GM12878 (cell line): ENCODE measurements at regions of chr10 and their contacts with region 1.

Region 1: DNA sequence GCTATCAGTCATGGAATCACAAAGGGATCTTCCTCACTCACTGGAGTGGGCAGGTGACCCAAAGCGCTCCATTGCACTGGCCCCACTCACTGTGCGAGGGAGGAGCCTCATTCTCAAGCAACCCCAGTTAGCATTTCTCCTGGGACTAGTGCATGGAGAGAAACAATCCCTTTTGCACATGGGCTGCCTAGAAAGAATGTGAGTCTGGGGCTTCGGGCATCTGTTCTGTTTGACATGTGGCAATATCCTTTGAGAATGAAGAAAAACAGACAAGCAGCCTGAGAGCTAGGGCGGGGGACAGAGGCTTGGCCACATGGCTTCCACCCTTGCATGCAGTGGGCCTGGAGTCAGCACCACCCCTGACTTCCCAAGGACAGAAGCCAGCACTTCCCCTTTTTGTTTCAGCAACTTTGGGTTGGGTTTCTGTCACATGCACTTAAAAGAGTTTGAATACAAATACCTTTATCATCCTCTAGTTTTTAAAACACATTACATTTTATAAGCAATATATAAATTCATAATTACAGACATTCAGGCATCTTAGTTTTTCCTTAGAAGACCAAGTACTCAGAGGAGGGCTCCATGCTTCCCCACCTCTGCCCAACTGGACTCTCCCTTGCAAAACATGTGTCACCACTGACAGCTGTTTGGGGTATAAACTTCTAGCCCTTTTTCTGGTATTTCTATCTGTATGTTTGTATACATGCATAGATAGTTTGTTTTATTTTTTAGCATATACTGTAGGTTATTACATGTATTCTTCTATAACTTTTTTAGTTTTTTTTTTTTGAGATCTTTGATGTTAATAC is 73.8 kb downstream of the RBM20 start:
- DNase-seq: no peak
- ATAC-seq: peak; percentile 74
- H3K4me3 ChIP-seq: no peak overlapping the region
- H3K27ac ChIP-seq: no peak overlapping the region
- H3K4me1 ChIP-seq: 0 out of 2 replicates have a peak, but pooled peaks cover 4% of the 10 kb centered on the region
- H3K27me3 ChIP-seq: no peaks in the 10 kb centered on the region
- CTCF ChIP-seq: no peak
- EP300 ChIP-seq: no peak
- POLR2A ChIP-seq: no peak
- RAD21 ChIP-seq: no peak

Region 2: GRCh38 chr10:110651044-110651958 is 66.7 kb before region 1 on chr10:
- CTCF ChIA-PET with region 1: no interaction called
- POLR2A ChIA-PET with region 1: no interaction called
- RAD21 ChIA-PET with region 1: no interaction called
- SMC1A ChIA-PET with region 1: no interaction called
- in situ Hi-C with region 1: no loop called
- intact Hi-C with region 1: loop called (anchors 10 kb)
- DNase-seq: no peak
- ATAC-seq: peak; percentile 92
- H3K4me3 ChIP-seq: no peak overlapping the region
- H3K27ac ChIP-seq: no peak overlapping the region
- H3K4me1 ChIP-seq: peaks cover 11% of the 10 kb centered on the region
- H3K27me3 ChIP-seq: no peaks in the 10 kb centered on the region
- CTCF ChIP-seq: no peak
- EP300 ChIP-seq: no peak
- POLR2A ChIP-seq: no peak
- RAD21 ChIP-seq: no peak

Region 3: DNA sequence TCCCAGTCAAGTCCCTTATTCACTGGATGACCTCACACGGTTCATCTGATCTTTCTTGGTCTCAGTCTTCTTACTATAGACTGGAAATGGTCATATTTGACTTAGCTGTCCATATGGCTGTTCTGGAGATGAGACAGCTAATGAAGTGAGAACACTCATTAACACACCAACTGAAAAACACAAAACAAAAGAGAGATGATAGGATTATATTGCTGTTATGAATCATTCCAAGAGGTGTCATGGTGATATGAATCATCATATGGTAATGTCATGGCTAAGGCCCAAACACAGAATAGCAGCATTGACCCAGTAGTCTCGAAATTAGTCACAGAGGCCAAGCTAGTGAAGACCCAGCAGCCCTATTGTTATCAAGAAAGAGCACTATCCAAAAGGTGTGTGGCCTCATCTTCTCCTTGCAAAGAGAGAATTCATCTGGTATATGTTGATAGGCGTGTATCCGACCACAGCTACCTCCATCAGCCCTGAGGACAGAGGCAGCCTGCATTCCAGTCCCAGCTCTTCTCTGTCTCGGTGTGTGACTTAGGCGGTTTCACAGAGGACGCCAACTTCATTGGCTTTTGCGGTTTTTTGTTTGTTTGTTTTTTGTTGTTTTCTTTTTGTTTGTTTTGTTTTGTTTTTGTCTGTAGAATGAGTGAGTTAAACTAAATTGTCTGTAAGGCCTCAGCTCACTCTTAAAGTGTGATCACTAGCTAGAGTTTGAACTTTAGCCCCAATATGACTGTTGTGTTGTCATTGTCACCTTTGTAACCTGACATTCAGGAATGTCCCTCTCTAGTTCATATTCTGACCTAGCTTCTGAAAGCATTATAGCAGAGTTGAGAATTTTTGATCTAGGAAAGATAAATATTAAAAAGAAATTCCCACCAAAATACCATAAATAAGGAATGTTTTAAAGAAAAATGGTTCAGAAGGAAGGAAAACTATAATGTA is 56.4 kb after region 1 on chr10:
- CTCF ChIA-PET with region 1: no interaction called
- POLR2A ChIA-PET with region 1: no interaction called
- RAD21 ChIA-PET with region 1: no interaction called
- SMC1A ChIA-PET with region 1: no interaction called
- in situ Hi-C with region 1: no loop called
- intact Hi-C with region 1: no loop called
- DNase-seq: peak; percentile 99
- ATAC-seq: peak; percentile 94
- H3K4me3 ChIP-seq: no peak overlapping the region
- H3K27ac ChIP-seq: peak overlapping the region; percentile 85
- H3K4me1 ChIP-seq: peaks cover 22% of the 10 kb centered on the region
- H3K27me3 ChIP-seq: no peaks in the 10 kb centered on the region
- CTCF ChIP-seq: no peak
- EP300 ChIP-seq: peak; percentile 100
- POLR2A ChIP-seq: peak; percentile 38; the same call in 1 of the 2 replicates
- RAD21 ChIP-seq: no peak